ENCODE measurements at regions of chr12 and their contacts with region 1.

Region 1: DNA sequence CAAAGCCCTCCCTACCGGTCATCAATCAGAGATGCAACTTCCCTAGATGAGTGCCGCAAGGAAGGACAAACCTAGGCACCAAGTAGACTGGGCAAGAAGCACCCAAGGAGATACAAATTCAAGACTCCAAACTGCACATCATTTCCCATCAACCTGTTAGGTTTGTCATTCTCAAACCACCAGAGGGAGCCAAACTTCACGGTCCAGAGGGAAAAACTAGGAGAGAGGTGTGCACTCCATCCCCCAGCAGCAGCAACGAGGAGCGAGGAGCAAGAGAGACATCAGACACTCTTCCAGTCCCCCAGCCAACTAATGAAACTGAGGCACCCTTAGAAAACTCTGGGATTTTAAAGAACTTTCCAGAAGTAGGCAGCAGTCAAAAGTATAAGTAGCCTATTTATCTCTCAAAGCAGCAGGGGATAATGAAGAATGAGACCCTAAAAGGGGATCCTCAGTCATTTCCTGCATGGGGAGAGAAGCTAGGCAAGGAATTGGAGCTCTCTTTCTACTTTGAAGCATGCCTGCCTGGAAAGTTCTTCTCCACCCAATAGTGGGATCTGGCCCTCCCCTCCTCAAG is 37.0 kb upstream of the NT5DC3 start:
- DNase-seq: peak; percentile 70
- H3K4me3 ChIP-seq: no peak overlapping the region
- H3K27ac ChIP-seq: no peak overlapping the region
- H3K4me1 ChIP-seq: no peaks in the 10 kb centered on the region
- H3K27me3 ChIP-seq: no peaks in the 10 kb centered on the region
- CTCF ChIP-seq: peak; percentile 46 to 70 (median 68)
- POLR2A ChIP-seq: no peak

Region 2: GRCh38 chr12:103771466-103771865 is 106.6 kb before region 1 on chr12:
- intact Hi-C with region 1: loop called (anchors 5 kb)
- DNase-seq: no peak
- H3K4me3 ChIP-seq: no peak overlapping the region
- H3K27ac ChIP-seq: no peak overlapping the region
- H3K4me1 ChIP-seq: no peaks in the 10 kb centered on the region
- H3K27me3 ChIP-seq: no peaks in the 10 kb centered on the region
- CTCF ChIP-seq: peak in 2 of 4 experiments; percentile 50 to 51
- POLR2A ChIP-seq: no peak

Region 3: DNA sequence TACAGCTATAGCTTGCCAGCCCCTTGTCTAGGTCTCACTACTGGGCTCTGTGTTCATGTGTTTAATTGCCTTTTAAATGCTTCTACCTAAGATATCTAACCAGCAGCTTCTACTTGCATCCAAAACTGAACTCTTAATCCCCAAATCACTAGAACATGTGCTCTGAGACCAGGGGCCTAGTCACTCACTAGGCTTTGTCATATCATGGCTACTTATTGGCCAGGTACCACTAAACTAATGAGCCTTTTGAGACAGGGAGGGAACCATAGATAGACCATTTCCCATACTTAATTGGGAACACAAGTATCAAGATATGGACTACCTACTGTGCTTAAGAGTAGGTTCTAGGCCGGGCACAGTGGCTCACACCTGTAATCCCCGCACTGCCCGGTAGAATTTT is 58.7 kb after region 1 on chr12:
- intact Hi-C with region 1: no loop called
- DNase-seq: no peak
- H3K4me3 ChIP-seq: no peak overlapping the region
- H3K27ac ChIP-seq: no peak overlapping the region
- H3K4me1 ChIP-seq: no peaks in the 10 kb centered on the region
- H3K27me3 ChIP-seq: no peaks in the 10 kb centered on the region
- CTCF ChIP-seq: no peak
- POLR2A ChIP-seq: no peak

Region 4: DNA sequence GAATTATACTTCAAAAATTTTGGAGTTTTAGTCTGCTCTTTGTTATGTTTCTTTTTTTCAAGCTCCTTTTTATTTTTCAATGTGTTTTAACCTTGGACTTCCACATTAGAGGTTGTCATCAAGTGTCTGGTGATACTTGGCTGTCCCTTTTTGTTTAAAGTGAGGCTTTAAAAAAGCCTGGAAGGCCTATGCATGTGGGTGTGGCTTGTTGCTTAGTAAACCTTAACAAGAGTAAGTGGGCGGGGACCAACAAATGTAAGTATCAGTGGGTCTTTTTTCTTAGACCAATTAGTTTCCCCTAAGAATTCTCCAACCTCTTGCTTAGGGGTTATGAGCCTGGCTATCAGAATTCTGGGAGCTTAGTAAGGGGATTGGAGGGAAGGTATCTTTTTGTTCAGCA is 212.7 kb after region 1 on chr12:
- intact Hi-C with region 1: no loop called
- DNase-seq: peak; percentile 43
- H3K4me3 ChIP-seq: no peak overlapping the region
- H3K27ac ChIP-seq: no peak overlapping the region
- H3K4me1 ChIP-seq: no peaks in the 10 kb centered on the region
- H3K27me3 ChIP-seq: no peaks in the 10 kb centered on the region
- CTCF ChIP-seq: no peak
- POLR2A ChIP-seq: no peak

Region 5: GRCh38 chr12:104108755-104109445 is 230.9 kb after region 1 on chr12:
- intact Hi-C with region 1: loop called (anchors 5 kb)
- DNase-seq: peak; percentile 74
- H3K4me3 ChIP-seq: no peak overlapping the region
- H3K27ac ChIP-seq: no peak overlapping the region
- H3K4me1 ChIP-seq: no peaks in the 10 kb centered on the region
- H3K27me3 ChIP-seq: no peaks in the 10 kb centered on the region
- CTCF ChIP-seq: peak; percentile 73 to 80 (median 79)
- POLR2A ChIP-seq: no peak